Right cardiac atrium (tissue), 5 donors: ENCODE measurements at regions of chr18 and their contacts with region 1.

Region 1: GRCh38 chr18:22169007-22169864 is at the start of gene GATA6:
- DNase-seq: peak; percentile 95 to 98 (median 97)
- ATAC-seq: peak; percentile 87
- H3K4me3 ChIP-seq: peak within 1 kb of the TSS; percentile 66
- H3K27ac ChIP-seq: peak within 1 kb of the TSS; percentile 86
- H3K4me1 ChIP-seq: no peaks in the 10 kb centered on the region
- H3K27me3 ChIP-seq: no peaks in the 10 kb centered on the region
- total RNA-seq, gene GATA6: 63.2 to 85.8 (median 77.9) TPM

Region 2: GRCh38 chr18:21914739-21915319 is 254.4 kb before region 1 on chr18:
- intact Hi-C with region 1: loop called in 1 of 4 experiments (anchors 10 kb)
- DNase-seq: no peak
- ATAC-seq: peak; percentile 78 to 79
- H3K4me3 ChIP-seq: no peak overlapping the region
- H3K27ac ChIP-seq: no peak overlapping the region
- H3K4me1 ChIP-seq: no peaks in the 10 kb centered on the region
- H3K27me3 ChIP-seq: no peaks in the 10 kb centered on the region

Region 3: GRCh38 chr18:21997207-21998143 is 171.8 kb before region 1 on chr18:
- intact Hi-C with region 1: loop called (anchors 5 to 10 kb)
- DNase-seq: no peak
- ATAC-seq: peak; percentile 66 to 77
- H3K4me3 ChIP-seq: no peak overlapping the region
- H3K27ac ChIP-seq: no peak overlapping the region
- H3K4me1 ChIP-seq: no peaks in the 10 kb centered on the region
- H3K27me3 ChIP-seq: no peaks in the 10 kb centered on the region

Region 4: DNA sequence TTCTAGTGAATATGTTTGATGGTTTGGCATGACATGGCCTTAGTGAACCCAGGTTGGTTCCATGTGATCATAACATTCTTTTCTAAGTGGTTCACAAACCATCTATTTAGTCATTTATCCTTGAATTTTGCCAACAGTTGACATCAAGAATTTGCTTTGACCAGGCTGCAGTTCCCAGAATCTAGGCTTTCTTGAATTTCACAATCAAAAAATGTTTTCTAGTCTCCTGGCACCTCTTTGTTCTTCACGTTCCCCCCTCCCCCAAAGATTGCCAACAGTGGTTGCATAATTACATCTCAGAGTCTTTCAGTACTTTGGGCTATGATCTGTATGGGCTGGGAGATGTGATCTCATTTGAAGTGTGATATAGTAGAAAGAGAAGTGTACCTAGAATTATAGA is 124.2 kb after region 1 on chr18:
- intact Hi-C with region 1: no loop called
- DNase-seq: no peak
- ATAC-seq: no peak
- H3K4me3 ChIP-seq: no peak overlapping the region
- H3K27ac ChIP-seq: no peak overlapping the region
- H3K4me1 ChIP-seq: peaks cover 2% of the 10 kb centered on the region
- H3K27me3 ChIP-seq: no peaks in the 10 kb centered on the region

Region 5: DNA sequence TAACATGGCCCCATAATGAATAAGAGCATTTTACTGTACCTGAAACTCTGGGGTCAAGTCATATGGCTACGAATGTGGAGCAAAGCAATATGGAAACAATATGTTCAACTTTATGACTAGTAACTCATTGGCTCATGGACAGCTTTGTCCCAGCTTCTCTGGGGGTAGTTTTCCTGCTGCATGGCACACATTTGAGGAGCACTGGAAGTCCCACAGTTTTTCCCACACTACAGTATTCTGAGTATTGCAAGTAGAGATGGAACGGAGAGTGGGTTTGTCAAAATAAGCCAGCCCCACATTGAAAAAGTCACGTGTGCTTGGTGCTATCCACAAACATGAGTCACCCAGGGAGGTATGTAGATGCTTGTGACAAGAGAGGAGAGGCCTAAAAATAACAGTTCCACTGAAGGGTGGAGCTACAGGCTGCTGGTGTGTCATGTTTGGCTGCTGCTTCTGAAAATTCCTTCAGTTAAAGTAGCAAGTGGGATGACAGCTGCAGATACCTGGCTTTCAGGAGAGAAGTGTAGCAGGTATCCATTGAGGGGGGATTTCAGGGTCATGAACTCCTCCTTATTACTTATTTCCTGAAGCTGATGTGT is 296.7 kb after region 1 on chr18:
- intact Hi-C with region 1: loop called in 3 of 4 experiments (anchors 10 kb)
- DNase-seq: peak in 1 of 3 donors; percentile 52
- ATAC-seq: peak; percentile 86 to 88
- H3K4me3 ChIP-seq: no peak overlapping the region
- H3K27ac ChIP-seq: peak overlapping the region; percentile 85
- H3K4me1 ChIP-seq: peaks cover 10% of the 10 kb centered on the region
- H3K27me3 ChIP-seq: no peaks in the 10 kb centered on the region

Region 6: GRCh38 chr18:22703883-22704585 is 534.8 kb after region 1 on chr18:
- intact Hi-C with region 1: loop called in 1 of 4 experiments (anchors 10 kb)
- DNase-seq: no peak
- ATAC-seq: peak; percentile 77 to 79
- H3K4me3 ChIP-seq: no peak overlapping the region
- H3K27ac ChIP-seq: no peak overlapping the region
- H3K4me1 ChIP-seq: no peaks in the 10 kb centered on the region
- H3K27me3 ChIP-seq: no peaks in the 10 kb centered on the region